Kidney (tissue), 22 donors: ENCODE measurements at regions of chr11 and their contacts with region 1.

Region 1: GRCh38 chr11:125933030-125933813 is 12.6 kb upstream of the VSIG10L2 start:
- DNase-seq: no peak
- H3K4me3 ChIP-seq: no peak overlapping the region
- H3K27ac ChIP-seq: no peak overlapping the region
- H3K4me1 ChIP-seq: no peaks in the 10 kb centered on the region
- H3K27me3 ChIP-seq: no peaks in the 10 kb centered on the region
- CTCF ChIP-seq: no peak

Region 2: DNA sequence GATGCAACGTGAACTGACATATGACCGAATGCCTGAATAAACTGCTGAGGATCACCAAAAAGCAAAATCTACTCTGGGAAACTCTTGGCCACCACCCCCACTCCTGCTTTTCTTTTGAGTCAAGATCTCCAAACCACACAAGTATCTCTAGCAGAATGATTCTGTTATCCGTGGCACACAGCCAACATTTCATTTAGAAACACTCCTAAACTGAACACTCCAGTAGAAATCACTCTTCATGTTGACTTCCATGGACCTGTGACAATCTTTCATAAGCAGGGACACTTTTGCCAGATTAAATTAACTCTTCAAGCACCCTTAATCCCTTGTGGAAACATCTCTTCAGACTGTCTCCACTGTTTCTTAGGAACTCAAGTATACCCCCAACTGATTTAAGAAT is 57.0 kb after region 1 on chr11:
- intact Hi-C with region 1: no loop called
- DNase-seq: peak in 1 of 5 donors; percentile 58
- H3K4me3 ChIP-seq: no peak overlapping the region
- H3K27ac ChIP-seq: no peak overlapping the region
- H3K4me1 ChIP-seq: no peaks in the 10 kb centered on the region
- H3K27me3 ChIP-seq: no peaks in the 10 kb centered on the region
- CTCF ChIP-seq: no peak

Region 3: GRCh38 chr11:126011265-126011664 is 78.0 kb after region 1 on chr11:
- intact Hi-C with region 1: no loop called
- DNase-seq: no peak
- H3K4me3 ChIP-seq: no peak overlapping the region
- H3K27ac ChIP-seq: no peak overlapping the region
- H3K4me1 ChIP-seq: no peaks in the 10 kb centered on the region
- H3K27me3 ChIP-seq: no peaks in the 10 kb centered on the region
- CTCF ChIP-seq: no peak

Region 4: GRCh38 chr11:126109941-126110731 is 176.9 kb after region 1 on chr11:
- intact Hi-C with region 1: no loop called
- DNase-seq: peak in 1 of 5 donors; percentile 36
- H3K4me3 ChIP-seq: no peak overlapping the region
- H3K27ac ChIP-seq: no peak overlapping the region
- H3K4me1 ChIP-seq: peaks cover 3 to 13% (median 8%) of the 10 kb centered on the region in 3 donors
- H3K27me3 ChIP-seq: no peaks in the 10 kb centered on the region
- CTCF ChIP-seq: no peak

Region 5: GRCh38 chr11:126181939-126182730 is 248.9 kb after region 1 on chr11:
- intact Hi-C with region 1: loop called (anchors 5 kb)
- DNase-seq: no peak
- H3K4me3 ChIP-seq: no peak overlapping the region
- H3K27ac ChIP-seq: no peak overlapping the region
- H3K4me1 ChIP-seq: peaks cover 0 to 8% (median 3%) of the 10 kb centered on the region in 3 donors
- H3K27me3 ChIP-seq: no peaks in the 10 kb centered on the region
- CTCF ChIP-seq: no peak